Aorta (tissue), 5 donors: ENCODE measurements at regions of chr5 and their contacts with region 1.

Region 1: GRCh38 chr5:110086658-110087388 is 397.1 kb downstream of the MAN2A1 start:
- DNase-seq: peak; percentile 36 to 78
- ATAC-seq: peak; percentile 61
- H3K4me3 ChIP-seq: no peak overlapping the region
- H3K27ac ChIP-seq: peak overlapping the region in 1 of 2 donors; percentile 75
- H3K4me1 ChIP-seq: peaks cover 0 to 6% of the 10 kb centered on the region in 2 donors
- H3K27me3 ChIP-seq: no peaks in the 10 kb centered on the region

Region 2: GRCh38 chr5:108432024-108432423 is 1654.8 kb before region 1 on chr5:
- intact Hi-C with region 1: no loop called
- DNase-seq: no peak
- ATAC-seq: no peak
- H3K4me3 ChIP-seq: no peak overlapping the region
- H3K27ac ChIP-seq: no peak overlapping the region
- H3K4me1 ChIP-seq: peaks cover 0 to 2% of the 10 kb centered on the region in 2 donors
- H3K27me3 ChIP-seq: no peaks in the 10 kb centered on the region

Region 3: DNA sequence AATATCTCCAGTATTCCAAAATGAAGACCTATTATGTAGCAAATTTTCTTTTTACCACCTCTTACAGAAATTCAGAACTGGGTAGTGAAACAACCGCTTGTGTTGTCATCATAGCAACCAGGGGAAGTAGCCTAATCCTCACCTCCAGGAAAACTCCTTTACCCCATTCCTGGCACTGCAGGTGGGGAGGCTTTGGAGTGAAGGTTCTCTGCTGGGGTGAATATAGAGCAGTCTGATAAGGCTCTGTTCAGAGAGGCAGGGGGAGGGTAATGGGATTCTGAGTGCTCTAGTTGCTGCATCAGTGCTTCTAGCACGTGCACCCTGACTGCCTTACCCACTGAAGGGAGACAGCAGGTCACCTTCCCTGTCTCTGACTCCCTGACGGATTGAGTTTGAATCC is 280.9 kb before region 1 on chr5:
- intact Hi-C with region 1: no loop called
- DNase-seq: no peak
- ATAC-seq: no peak
- H3K4me3 ChIP-seq: no peak overlapping the region
- H3K27ac ChIP-seq: peak overlapping the region in 1 of 2 donors; percentile 71
- H3K4me1 ChIP-seq: no peaks in the 10 kb centered on the region
- H3K27me3 ChIP-seq: no peaks in the 10 kb centered on the region

Region 4: DNA sequence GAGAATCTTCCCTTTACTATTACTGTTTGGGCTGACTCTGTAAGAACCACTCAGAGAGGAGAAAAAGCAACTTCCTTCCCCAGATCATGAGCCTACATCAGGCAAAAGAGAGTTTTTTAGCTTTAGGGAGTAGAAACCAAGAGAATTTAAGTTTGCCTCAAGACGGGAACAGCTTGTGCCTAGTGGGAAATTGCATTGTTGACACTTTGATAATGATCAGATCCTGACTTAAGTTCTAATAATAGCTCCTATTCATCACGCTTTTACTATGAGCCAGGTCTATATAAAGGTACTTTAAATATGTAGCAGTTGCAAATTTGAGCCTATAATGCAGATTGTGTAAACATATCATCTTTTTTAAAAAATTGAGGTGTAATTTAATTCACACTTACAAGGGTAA is 98.9 kb before region 1 on chr5:
- intact Hi-C with region 1: loop called in 1 of 2 experiments (anchors 5 kb)
- DNase-seq: no peak
- ATAC-seq: peak; percentile 76
- H3K4me3 ChIP-seq: peak overlapping the region in 1 of 2 donors; percentile 41
- H3K27ac ChIP-seq: peak overlapping the region in 1 of 2 donors; percentile 98
- H3K4me1 ChIP-seq: peaks cover 2 to 13% of the 10 kb centered on the region in 2 donors
- H3K27me3 ChIP-seq: no peaks in the 10 kb centered on the region

Region 5: DNA sequence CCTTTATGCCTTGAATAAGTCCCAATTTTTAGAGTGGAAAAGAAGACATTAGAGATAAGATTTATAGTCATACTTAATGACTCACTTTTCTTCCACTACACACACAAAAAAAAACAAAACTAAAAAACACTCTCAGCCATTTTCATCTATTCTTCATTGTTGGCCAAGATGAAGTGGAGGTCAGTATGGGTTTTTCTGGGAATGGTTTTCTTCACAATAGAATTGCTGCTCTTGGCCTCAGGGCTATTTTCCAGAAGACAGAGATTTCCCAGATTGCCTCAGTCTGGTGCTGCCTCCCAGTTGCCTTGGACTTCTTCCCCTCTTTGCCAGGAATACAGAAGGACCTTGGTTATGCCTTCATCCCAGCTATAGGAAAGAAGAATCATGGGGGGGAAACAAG is 175.9 kb after region 1 on chr5:
- intact Hi-C with region 1: loop called in 1 of 2 experiments (anchors 10 kb)
- DNase-seq: no peak
- ATAC-seq: peak; percentile 80
- H3K4me3 ChIP-seq: no peak overlapping the region
- H3K27ac ChIP-seq: peak overlapping the region in 1 of 2 donors; percentile 76
- H3K4me1 ChIP-seq: peaks cover 0 to 4% of the 10 kb centered on the region in 2 donors
- H3K27me3 ChIP-seq: no peaks in the 10 kb centered on the region